GM12878 (cell line): ENCODE measurements at regions of chr12 and their contacts with region 1.

Region 1: DNA sequence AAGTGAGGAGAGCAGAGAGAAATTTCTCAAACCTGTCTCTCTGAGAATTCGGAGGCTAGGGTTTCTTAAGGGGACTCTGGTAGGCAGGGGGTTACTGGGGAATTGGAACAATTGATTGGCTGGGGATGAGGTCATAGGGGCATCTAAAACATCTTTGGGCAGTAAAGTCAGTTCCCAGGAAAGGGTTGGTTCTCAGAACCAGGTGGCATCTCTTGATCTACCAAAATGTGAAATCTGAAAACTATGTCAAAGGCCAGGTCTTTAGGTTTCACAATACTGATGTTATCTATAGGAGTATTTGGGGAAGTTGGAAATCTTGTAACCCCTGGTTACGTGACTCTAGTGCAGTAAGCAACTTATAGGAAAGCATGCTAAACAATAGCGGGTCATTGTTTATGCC is 6.9 kb downstream of the C12orf75 start:
- DNase-seq: no peak
- ATAC-seq: peak; percentile 50
- H3K4me3 ChIP-seq: no peak overlapping the region
- H3K27ac ChIP-seq: no peak overlapping the region
- H3K4me1 ChIP-seq: peaks cover 13% of the 10 kb centered on the region
- H3K27me3 ChIP-seq: no peaks in the 10 kb centered on the region
- CTCF ChIP-seq: no peak
- EP300 ChIP-seq: no peak
- POLR2A ChIP-seq: no peak
- RAD21 ChIP-seq: no peak

Region 2: GRCh38 chr12:104494137-104494792 is 843.1 kb before region 1 on chr12:
- CTCF ChIA-PET with region 1: no interaction called
- POLR2A ChIA-PET with region 1: no interaction called
- RAD21 ChIA-PET with region 1: no interaction called
- SMC1A ChIA-PET with region 1: no interaction called
- in situ Hi-C with region 1: no loop called
- intact Hi-C with region 1: no loop called
- DNase-seq: peak; percentile 57
- ATAC-seq: peak; percentile 77
- H3K4me3 ChIP-seq: peak overlapping the region; percentile 57
- H3K27ac ChIP-seq: peak overlapping the region; percentile 83
- H3K4me1 ChIP-seq: peaks cover 52% of the 10 kb centered on the region
- H3K27me3 ChIP-seq: no peaks in the 10 kb centered on the region
- CTCF ChIP-seq: no peak
- EP300 ChIP-seq: peak in 1 of 2 experiments; percentile 16; a peak in 1 of 4 replicates
- POLR2A ChIP-seq: peak; percentile 50
- RAD21 ChIP-seq: no peak

Region 3: GRCh38 chr12:105352052-105352451 is 14.7 kb after region 1 on chr12:
- CTCF ChIA-PET with region 1: interaction called, 38 read pairs
- POLR2A ChIA-PET with region 1: interaction called, 38 read pairs
- RAD21 ChIA-PET with region 1: interaction called, 47 read pairs
- SMC1A ChIA-PET with region 1: interaction called, 102 read pairs
- in situ Hi-C with region 1: no loop called
- intact Hi-C with region 1: no loop called
- DNase-seq: peak; percentile 72
- ATAC-seq: peak; percentile 91
- H3K4me3 ChIP-seq: 0 out of 2 replicates have a peak overlapping the region, but pooled peaks have one; percentile 13
- H3K27ac ChIP-seq: peak overlapping the region; percentile 62
- H3K4me1 ChIP-seq: peaks cover 28% of the 10 kb centered on the region
- H3K27me3 ChIP-seq: no peaks in the 10 kb centered on the region
- CTCF ChIP-seq: no peak
- EP300 ChIP-seq: peak; percentile 66 to 78; a peak in 3 of 4 replicates
- POLR2A ChIP-seq: no peak
- RAD21 ChIP-seq: no peak

Region 4: DNA sequence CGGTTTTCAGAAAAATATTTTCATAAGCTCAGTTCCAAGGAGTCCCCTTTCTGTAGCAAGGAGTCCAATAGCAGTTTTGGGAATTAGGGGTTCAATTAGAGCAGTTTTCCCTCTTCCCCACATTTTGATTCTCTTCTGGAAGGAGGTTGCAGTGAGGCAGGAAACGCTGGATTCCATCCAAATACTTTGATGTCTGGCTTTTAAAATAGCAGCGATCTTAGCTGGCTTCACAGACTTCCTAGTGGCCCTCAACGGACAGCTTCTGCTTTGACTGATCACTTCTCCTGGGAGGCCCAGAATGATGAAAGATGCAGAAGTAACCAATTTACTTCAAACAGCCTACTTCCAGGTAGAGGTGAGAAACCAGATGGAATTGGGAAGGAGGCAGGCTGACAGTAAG is 56.2 kb after region 1 on chr12:
- CTCF ChIA-PET with region 1: no interaction called
- POLR2A ChIA-PET with region 1: no interaction called
- RAD21 ChIA-PET with region 1: no interaction called
- SMC1A ChIA-PET with region 1: no interaction called
- in situ Hi-C with region 1: no loop called
- intact Hi-C with region 1: no loop called
- DNase-seq: no peak
- ATAC-seq: no peak
- H3K4me3 ChIP-seq: no peak overlapping the region
- H3K27ac ChIP-seq: no peak overlapping the region
- H3K4me1 ChIP-seq: no peaks in the 10 kb centered on the region
- H3K27me3 ChIP-seq: no peaks in the 10 kb centered on the region
- CTCF ChIP-seq: no peak
- EP300 ChIP-seq: no peak
- POLR2A ChIP-seq: no peak
- RAD21 ChIP-seq: no peak

Region 5: DNA sequence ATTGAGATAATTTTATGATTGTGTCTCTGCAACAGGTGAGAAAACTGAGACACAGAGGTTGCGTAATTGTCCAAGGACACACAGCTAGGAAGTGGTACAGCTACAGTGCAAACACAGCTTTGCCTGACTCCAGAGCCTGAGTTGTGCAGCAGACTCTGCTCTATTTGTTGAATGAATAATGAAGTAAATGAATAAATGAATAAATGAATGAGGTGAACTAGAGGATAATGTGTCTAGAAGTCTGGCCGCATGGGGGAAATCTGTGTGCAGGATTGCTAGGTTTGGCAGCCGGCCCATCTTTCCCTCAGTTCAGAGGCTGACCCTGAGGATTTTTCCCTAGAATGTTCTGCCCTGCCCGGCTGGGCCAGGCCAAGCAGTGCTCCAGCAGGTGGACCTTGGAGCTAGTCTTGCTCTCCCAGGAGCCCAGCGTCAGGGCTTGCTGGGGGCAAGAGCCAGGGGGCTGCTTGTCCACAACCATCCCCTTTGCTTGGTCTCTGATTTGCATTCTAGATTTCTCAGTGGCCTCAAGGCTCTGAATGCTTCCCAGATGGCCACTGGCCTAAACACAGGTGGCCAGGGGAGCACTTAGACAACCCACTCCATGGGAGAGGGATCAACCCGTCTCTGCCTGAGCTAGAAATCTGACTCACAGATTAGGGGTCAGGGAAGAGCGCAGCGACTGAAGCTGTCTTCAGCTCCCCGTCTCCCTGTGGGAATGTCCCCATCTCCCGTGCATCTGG is 218.3 kb after region 1 on chr12:
- CTCF ChIA-PET with region 1: no interaction called
- POLR2A ChIA-PET with region 1: no interaction called
- RAD21 ChIA-PET with region 1: no interaction called
- SMC1A ChIA-PET with region 1: no interaction called
- in situ Hi-C with region 1: no loop called
- intact Hi-C with region 1: no loop called
- DNase-seq: no peak
- ATAC-seq: no peak
- H3K4me3 ChIP-seq: no peak overlapping the region
- H3K27ac ChIP-seq: no peak overlapping the region
- H3K4me1 ChIP-seq: no peaks in the 10 kb centered on the region
- H3K27me3 ChIP-seq: no peaks in the 10 kb centered on the region
- CTCF ChIP-seq: no peak
- EP300 ChIP-seq: no peak
- POLR2A ChIP-seq: no peak
- RAD21 ChIP-seq: no peak